T-cell (primary cell): ENCODE measurements at regions of chr1 and their contacts with region 1.

Region 1: GRCh38 chr1:6359216-6360116 is 34.1 kb downstream of the ACOT7 start:
- DNase-seq: peak in 29 of 35 experiments; percentile 11 to 72 (median 34)
- ATAC-seq: peak; percentile 54 to 84 (median 73)
- H3K4me3 ChIP-seq: peak overlapping the region; percentile 37 to 66
- H3K4me3 Mint-ChIP-seq: peak overlapping the region; percentile 63 to 79 (median 70)
- H3K27ac ChIP-seq: peak overlapping the region; percentile 92
- H3K27ac Mint-ChIP-seq: peak overlapping the region; percentile 94 to 96
- H3K4me1 ChIP-seq: peaks cover 18 to 54% of the 10 kb centered on the region in 2 experiments
- H3K4me1 Mint-ChIP-seq: peaks cover 47 to 56% (median 55%) of the 10 kb centered on the region in 3 donors
- H3K27me3 ChIP-seq: peaks cover 0 to 2% of the 10 kb centered on the region in 2 experiments
- H3K27me3 Mint-ChIP-seq: no peaks in the 10 kb centered on the region

Region 2: DNA sequence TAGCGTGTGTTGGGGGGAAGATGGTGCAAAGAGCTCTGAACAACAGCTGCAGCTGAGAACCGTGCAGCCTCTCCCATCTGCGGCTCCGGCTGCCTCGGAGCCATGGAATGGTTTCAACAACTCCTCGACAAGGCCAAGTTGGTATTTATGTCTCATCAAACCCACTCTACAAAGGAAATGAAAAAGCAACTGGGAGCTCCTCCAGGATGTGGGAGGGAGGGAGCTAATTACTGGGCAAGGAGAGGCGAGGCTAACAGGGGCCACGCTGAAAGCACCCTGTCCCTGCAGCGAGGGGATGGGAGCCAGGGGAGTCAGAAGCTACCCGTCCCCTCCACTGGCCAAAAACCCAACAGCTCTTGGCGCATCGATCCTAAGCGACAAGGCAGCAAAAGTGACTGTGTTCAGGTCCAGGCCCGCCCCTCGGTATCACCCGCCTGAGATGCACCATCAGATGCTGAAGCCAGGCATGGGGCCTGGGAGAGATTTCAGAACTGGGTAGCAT is 29.0 kb before region 1 on chr1:
- CTCF ChIA-PET with region 1: no interaction called
- POLR2A ChIA-PET with region 1: no interaction called
- DNase-seq: no peak
- ATAC-seq: no peak
- H3K4me3 ChIP-seq: no peak overlapping the region
- H3K4me3 Mint-ChIP-seq: no peak overlapping the region
- H3K27ac ChIP-seq: no peak overlapping the region
- H3K27ac Mint-ChIP-seq: no peak overlapping the region
- H3K4me1 ChIP-seq: no peaks in the 10 kb centered on the region
- H3K4me1 Mint-ChIP-seq: no peaks in the 10 kb centered on the region
- H3K27me3 ChIP-seq: no peaks in the 10 kb centered on the region
- H3K27me3 Mint-ChIP-seq: no peaks in the 10 kb centered on the region

Region 3: DNA sequence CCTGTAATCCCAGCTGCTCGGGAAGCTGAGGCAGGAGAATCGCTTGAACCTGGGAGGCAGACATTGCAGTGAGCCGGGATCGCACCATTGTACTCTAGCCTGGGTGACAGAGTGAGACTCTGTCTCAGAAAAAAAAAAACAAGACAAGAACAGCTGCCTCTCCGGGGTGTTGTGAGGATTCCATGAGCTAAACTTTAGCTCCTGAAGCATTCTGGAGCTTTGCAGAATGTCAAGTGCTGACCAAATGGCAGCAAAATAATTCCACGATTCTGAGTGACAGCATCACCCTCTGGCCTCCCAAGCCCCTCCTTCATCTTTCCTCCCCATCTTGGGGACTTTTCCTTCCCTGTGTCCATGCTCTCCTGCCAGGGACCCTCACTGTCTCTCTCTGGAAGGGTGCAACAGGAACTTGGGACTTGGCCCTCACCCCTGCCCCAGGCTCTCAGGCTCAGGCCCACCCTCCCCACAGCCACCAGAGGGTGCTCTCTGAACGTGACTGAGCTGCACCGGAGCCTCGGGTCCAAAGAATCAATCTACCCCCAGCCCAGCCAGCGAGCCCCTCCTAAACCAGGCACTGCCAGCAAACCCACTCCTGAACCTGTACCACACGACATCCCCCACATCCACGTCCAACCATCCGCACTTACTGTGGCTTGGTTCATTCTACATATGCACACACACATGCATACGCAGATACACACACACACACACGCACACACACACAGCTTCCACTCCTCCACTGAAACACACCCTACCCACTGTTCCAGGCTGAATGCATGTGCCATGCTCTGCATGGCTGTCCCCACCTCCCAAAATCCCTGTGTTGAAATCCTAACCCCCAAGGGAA is 11.6 kb before region 1 on chr1:
- CTCF ChIA-PET with region 1: interaction called, 7 to 12 read pairs
- POLR2A ChIA-PET with region 1: no interaction called
- DNase-seq: peak; percentile 27 to 79 (median 58)
- ATAC-seq: peak; percentile 61 to 74 (median 66)
- H3K4me3 ChIP-seq: peak overlapping the region; percentile 6 to 28
- H3K4me3 Mint-ChIP-seq: peak overlapping the region; percentile 49 to 88 (median 53)
- H3K27ac ChIP-seq: peak overlapping the region; percentile 76
- H3K27ac Mint-ChIP-seq: peak overlapping the region; percentile 79 to 82
- H3K4me1 ChIP-seq: peaks cover 3 to 24% of the 10 kb centered on the region in 2 experiments
- H3K4me1 Mint-ChIP-seq: peaks cover 22 to 30% (median 27%) of the 10 kb centered on the region in 3 donors
- H3K27me3 ChIP-seq: no peaks in the 10 kb centered on the region
- H3K27me3 Mint-ChIP-seq: no peaks in the 10 kb centered on the region

Region 4: GRCh38 chr1:6538956-6539355 is 179.5 kb after region 1 on chr1:
- CTCF ChIA-PET with region 1: no interaction called
- POLR2A ChIA-PET with region 1: no interaction called
- DNase-seq: no peak
- ATAC-seq: no peak
- H3K4me3 ChIP-seq: no peak overlapping the region
- H3K4me3 Mint-ChIP-seq: no peak overlapping the region
- H3K27ac ChIP-seq: no peak overlapping the region
- H3K27ac Mint-ChIP-seq: peak overlapping the region; percentile 32 to 55
- H3K4me1 ChIP-seq: peaks cover 0 to 4% of the 10 kb centered on the region in 2 experiments
- H3K4me1 Mint-ChIP-seq: peaks cover 0 to 12% (median 4%) of the 10 kb centered on the region in 3 donors
- H3K27me3 ChIP-seq: no peaks in the 10 kb centered on the region
- H3K27me3 Mint-ChIP-seq: no peaks in the 10 kb centered on the region

Region 5: DNA sequence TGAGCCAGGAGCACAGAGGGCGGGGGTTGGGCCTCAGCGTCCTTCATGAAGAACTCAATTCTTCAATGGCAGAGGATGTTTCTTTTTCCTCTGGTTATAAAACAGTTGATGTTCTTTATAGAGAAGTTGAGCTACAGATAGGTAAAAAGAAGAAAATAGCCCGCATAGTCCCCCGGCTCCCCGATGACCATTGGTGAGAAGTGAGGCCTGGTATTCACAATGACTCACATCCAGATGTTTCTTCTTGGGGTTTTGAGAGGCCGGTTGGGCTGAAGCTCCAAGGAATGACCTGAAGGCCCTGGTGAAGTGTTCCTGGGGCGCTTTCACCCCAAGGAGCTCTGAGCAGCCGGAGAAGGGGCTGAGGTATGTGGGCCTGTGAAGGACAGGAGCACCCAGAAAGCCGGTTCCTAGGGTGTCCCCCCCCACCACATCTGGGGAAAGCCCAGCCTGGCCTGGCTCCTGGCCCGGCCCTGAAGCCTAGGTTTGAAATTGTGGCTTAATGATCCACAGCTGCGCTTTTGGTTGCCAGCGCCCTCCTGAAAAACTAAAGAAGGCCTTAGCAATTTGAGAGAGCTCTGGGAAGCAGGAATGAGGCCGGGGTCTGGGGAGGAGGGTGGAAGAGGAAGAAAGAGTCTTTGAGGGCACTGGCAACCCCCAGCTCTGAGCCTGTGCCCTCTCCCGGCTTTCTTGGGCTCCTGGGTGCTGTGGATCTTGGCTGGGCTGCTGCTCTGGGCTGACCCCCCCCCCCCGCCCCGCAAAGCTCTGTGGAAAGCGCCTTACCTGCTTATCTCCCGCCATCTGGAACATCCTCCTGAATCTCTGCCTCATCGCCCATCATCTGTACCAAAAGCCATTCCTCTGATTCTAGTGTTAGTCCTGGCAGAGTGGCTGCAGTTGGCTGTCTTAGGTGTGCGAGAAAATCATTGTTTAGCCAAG is 870.5 kb after region 1 on chr1:
- CTCF ChIA-PET with region 1: no interaction called
- POLR2A ChIA-PET with region 1: no interaction called
- DNase-seq: no peak
- ATAC-seq: no peak
- H3K4me3 ChIP-seq: no peak overlapping the region
- H3K4me3 Mint-ChIP-seq: no peak overlapping the region
- H3K27ac ChIP-seq: no peak overlapping the region
- H3K27ac Mint-ChIP-seq: no peak overlapping the region
- H3K4me1 ChIP-seq: no peaks in the 10 kb centered on the region
- H3K4me1 Mint-ChIP-seq: no peaks in the 10 kb centered on the region
- H3K27me3 ChIP-seq: peaks cover 0 to 31% of the 10 kb centered on the region in 2 experiments
- H3K27me3 Mint-ChIP-seq: peaks cover 4 to 5% of the 10 kb centered on the region in 2 donors